Activated B cell treated with CpG ODN at 0.5 μM for 24 hours (primary cell): ENCODE measurements at regions of chr1 and their contacts with region 1.

Region 1: DNA sequence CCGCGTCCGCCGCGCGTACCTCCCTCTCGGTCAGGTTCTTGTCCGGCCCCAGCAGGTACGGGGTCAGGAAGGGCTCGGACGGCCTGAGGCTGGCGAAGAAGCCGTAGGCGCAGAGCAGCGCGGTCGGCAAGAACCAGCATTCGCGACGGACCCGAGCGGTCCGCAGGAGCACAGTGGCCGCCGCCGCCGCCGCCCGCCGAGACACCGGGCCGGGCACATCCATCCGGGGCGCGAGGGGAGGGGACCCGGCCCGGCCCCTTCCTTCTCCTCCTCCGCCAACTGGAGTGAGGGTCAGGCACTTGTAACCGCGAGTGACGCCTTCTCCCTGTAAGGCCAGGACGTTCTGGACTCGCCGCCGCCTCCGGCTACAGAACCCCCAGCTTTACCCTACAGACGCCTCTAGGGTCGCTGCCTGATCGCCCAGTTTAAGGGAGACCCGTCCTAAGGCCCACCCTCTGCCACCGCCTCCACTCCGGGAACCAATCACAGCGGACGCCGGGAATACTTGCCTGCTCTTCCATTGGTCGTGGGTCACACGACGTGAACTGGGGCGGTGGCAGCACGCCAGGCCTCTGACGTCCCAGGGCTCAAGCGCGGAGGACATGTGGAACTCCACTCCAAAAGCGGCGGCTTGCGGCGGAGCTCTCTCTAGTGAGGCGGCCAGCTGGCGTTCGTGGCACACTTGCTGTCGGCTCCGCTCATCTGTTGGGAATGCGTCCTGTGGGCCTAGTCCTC is at the start of gene SLC19A2:
- DNase-seq: peak; percentile 86
- ATAC-seq: peak; percentile 98
- H3K4me3 Mint-ChIP-seq: peak within 1 kb of the TSS; percentile 88
- H3K27ac Mint-ChIP-seq: peak within 1 kb of the TSS; percentile 82
- H3K4me1 Mint-ChIP-seq: peaks cover 27% of the 10 kb centered on the region
- H3K27me3 Mint-ChIP-seq: no peaks in the 10 kb centered on the region
- CTCF ChIP-seq: no peak
- total RNA-seq, gene SLC19A2: 3.0 and 3.6 TPM in 2 replicates

Region 2: DNA sequence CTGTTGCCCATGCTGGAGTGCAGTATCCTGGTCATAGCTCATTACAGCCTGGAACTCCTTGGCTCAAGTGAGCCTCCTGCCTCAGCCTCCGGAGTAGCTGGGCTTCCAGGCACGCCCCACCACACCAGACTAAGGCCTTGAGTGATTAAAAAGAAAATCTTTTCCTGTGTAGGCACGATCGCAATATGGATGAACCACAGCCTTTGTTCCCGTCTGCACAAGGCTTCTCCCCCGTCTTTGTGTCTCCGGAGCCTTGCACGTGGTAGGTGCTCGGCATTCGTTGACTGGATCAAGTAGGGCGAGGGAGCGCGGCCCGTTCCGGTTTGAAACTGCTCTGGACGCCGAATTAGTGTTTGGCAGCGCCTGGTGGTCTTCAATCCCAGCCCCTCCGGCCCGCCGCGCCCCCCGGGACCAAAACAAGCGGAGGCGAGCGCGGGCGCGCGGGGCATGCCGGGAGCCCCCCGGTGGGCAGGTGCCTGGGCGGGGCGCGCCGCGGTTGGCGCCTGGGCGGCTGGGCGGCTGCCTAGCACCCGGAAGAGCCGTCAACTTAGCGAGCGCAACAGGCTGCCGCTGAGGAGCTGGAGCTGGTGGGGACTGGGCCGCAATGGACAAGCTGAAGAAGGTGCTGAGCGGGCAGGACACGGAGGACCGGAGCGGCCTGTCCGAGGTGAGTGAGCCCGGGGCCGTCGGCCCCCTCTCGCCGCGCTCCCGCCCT is 1260.1 kb before region 1 on chr1 and contains the start of gene SFT2D2:
- CTCF ChIA-PET with region 1: no interaction called
- POLR2A ChIA-PET with region 1: no interaction called
- intact Hi-C with region 1: loop called (anchors 10 kb)
- DNase-seq: peak; percentile 85
- ATAC-seq: peak; percentile 92
- H3K4me3 Mint-ChIP-seq: peak within 1 kb of the TSS; percentile 96
- H3K27ac Mint-ChIP-seq: peak within 1 kb of the TSS; percentile 93
- H3K4me1 Mint-ChIP-seq: peaks cover 47% of the 10 kb centered on the region
- H3K27me3 Mint-ChIP-seq: no peaks in the 10 kb centered on the region
- CTCF ChIP-seq: no peak
- total RNA-seq, gene SFT2D2: 62.7 and 63.4 TPM in 2 replicates

Region 3: DNA sequence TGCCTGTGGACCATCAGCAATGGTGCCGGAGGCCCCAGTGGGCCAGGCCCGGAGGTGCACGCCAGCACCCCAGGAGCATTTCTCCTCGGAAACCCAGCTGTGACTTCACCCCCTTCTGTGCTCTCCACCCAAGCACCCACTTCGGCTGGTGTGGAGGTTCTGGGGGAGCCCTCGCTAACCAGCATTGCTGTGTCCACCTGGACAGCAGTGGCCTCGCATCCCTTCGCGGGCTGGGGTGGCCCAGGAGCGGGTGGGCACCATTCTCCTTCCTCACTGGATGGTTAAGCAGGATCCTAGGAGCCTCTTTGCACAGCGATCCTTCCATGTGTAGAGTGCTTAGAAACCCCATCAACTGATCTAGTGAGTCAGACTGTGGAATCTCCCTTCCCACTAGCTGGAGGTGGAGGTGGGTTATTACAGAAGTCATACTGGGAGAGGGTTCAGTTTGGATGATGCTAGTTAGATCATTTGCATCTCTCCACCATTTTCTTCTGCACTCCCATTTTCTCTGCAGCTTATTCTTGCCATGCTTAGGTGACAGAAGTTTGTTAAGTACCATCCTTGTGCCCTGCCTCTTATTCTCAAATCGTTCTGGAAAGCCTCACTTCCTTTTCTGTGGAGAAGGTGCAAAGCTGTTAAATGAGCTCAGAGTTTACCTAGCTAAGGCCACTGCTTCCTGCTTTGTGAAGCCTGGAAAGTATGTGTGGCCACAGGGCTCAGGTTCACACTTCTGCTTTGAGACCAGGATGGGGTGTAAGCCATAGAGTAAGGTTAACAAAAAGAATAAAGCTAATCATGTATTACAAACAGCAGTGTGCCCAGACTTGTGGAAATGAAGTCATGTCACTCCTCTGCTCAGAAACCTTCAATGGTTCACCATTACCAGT is 1172.8 kb before region 1 on chr1:
- CTCF ChIA-PET with region 1: no interaction called
- POLR2A ChIA-PET with region 1: no interaction called
- intact Hi-C with region 1: no loop called
- DNase-seq: no peak
- ATAC-seq: no peak
- H3K4me3 Mint-ChIP-seq: no peak overlapping the region
- H3K27ac Mint-ChIP-seq: no peak overlapping the region
- H3K4me1 Mint-ChIP-seq: no peaks in the 10 kb centered on the region
- H3K27me3 Mint-ChIP-seq: no peaks in the 10 kb centered on the region
- CTCF ChIP-seq: no peak

Region 4: GRCh38 chr1:169466259-169467230 is 19.2 kb before region 1 on chr1:
- CTCF ChIA-PET with region 1: no interaction called
- POLR2A ChIA-PET with region 1: no interaction called
- intact Hi-C with region 1: no loop called
- DNase-seq: no peak
- ATAC-seq: no peak
- H3K4me3 Mint-ChIP-seq: no peak overlapping the region
- H3K27ac Mint-ChIP-seq: no peak overlapping the region
- H3K4me1 Mint-ChIP-seq: no peaks in the 10 kb centered on the region
- H3K27me3 Mint-ChIP-seq: no peaks in the 10 kb centered on the region
- CTCF ChIP-seq: no peak

Region 5: GRCh38 chr1:169586395-169587255 is 100.9 kb after region 1 on chr1 and contains the start of gene F5:
- CTCF ChIA-PET with region 1: no interaction called
- POLR2A ChIA-PET with region 1: no interaction called
- intact Hi-C with region 1: loop called (anchors 5 kb)
- DNase-seq: peak; percentile 40
- ATAC-seq: peak; percentile 98
- H3K4me3 Mint-ChIP-seq: peak within 1 kb of the TSS; percentile 66
- H3K27ac Mint-ChIP-seq: no peak within 1 kb of the TSS
- H3K4me1 Mint-ChIP-seq: peaks cover 7% of the 10 kb centered on the region
- H3K27me3 Mint-ChIP-seq: peaks cover 18% of the 10 kb centered on the region
- CTCF ChIP-seq: no peak
- total RNA-seq, gene F5: 0.66 and 0.67 TPM in 2 replicates

Region 6: GRCh38 chr1:169809370-169810095 is 323.8 kb after region 1 on chr1:
- CTCF ChIA-PET with region 1: no interaction called
- POLR2A ChIA-PET with region 1: no interaction called
- intact Hi-C with region 1: loop called (anchors 5 kb)
- DNase-seq: no peak
- ATAC-seq: peak; percentile 37
- H3K4me3 Mint-ChIP-seq: no peak overlapping the region
- H3K27ac Mint-ChIP-seq: no peak overlapping the region
- H3K4me1 Mint-ChIP-seq: no peaks in the 10 kb centered on the region
- H3K27me3 Mint-ChIP-seq: no peaks in the 10 kb centered on the region
- CTCF ChIP-seq: peak; percentile 62

Region 7: GRCh38 chr1:170531758-170532657 is 1046.3 kb after region 1 on chr1 and contains the start of gene GORAB:
- CTCF ChIA-PET with region 1: no interaction called
- POLR2A ChIA-PET with region 1: no interaction called
- intact Hi-C with region 1: loop called (anchors 1 kb)
- DNase-seq: peak; percentile 77
- ATAC-seq: peak; percentile 98
- H3K4me3 Mint-ChIP-seq: no peak within 1 kb of the TSS
- H3K27ac Mint-ChIP-seq: no peak within 1 kb of the TSS
- H3K4me1 Mint-ChIP-seq: peaks cover 13% of the 10 kb centered on the region
- H3K27me3 Mint-ChIP-seq: peaks cover 4% of the 10 kb centered on the region
- CTCF ChIP-seq: no peak
- total RNA-seq, gene GORAB: 20.0 and 20.2 TPM in 2 replicates